Activated B cell treated with CpG ODN at 0.5 μM for 24 hours (primary cell): ENCODE measurements at regions of chr1 and their contacts with region 1.

Region 1: DNA sequence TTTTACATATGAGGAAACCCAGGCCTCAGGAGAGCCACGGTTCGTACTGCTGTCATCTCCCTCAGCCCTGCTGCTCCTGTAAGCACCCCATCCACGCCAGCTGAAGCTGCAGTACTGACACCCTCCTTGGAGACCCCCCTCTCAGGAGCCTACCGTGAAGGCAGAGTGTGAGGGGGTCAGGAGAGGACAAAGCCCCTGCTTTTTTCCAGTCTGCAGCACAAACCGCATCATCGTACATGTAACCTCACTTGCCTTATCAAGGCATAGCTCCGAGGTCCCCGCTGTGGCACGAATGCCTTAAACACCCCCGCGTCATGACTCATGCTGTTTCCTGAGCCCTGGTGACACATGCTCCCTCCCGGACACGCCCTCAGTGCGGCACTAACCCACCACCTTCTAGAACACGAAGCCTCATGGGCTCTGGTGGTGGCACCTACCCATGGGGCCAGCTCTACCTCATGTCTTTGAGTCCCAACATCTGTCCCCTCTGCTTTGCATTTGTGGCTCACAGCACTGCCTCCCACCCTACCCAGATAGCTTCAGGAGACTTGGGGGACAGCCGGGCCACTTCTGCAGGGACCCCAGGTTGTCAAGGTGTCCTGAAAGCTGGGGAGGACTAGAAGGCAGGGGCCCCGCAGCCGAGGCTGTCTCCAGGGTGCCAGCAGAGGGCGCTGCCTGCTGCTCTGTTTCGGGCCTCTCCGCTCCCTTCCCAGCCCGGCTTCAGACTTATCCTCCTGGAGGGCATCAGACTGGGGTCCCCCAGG is 4.9 kb downstream of the SH3BGRL3 start:
- DNase-seq: peak; percentile 75
- ATAC-seq: peak; percentile 54
- H3K4me3 Mint-ChIP-seq: peak overlapping the region; percentile 83
- H3K27ac Mint-ChIP-seq: peak overlapping the region; percentile 100
- H3K4me1 Mint-ChIP-seq: peaks cover 93% of the 10 kb centered on the region
- H3K27me3 Mint-ChIP-seq: no peaks in the 10 kb centered on the region
- CTCF ChIP-seq: no peak

Region 2: GRCh38 chr1:26111530-26112406 is 173.0 kb before region 1 on chr1 and contains the start of gene PDIK1L:
- CTCF ChIA-PET with region 1: no interaction called
- POLR2A ChIA-PET with region 1: interaction called, 4 read pairs
- intact Hi-C with region 1: loop called (anchors 2 kb)
- DNase-seq: peak; percentile 90
- ATAC-seq: peak; percentile 80
- H3K4me3 Mint-ChIP-seq: peak within 1 kb of the TSS; percentile 94
- H3K27ac Mint-ChIP-seq: peak within 1 kb of the TSS; percentile 89
- H3K4me1 Mint-ChIP-seq: peaks cover 20% of the 10 kb centered on the region
- H3K27me3 Mint-ChIP-seq: no peaks in the 10 kb centered on the region
- CTCF ChIP-seq: no peak
- total RNA-seq, gene PDIK1L: 9.4 and 10.5 TPM in 2 replicates

Region 3: GRCh38 chr1:26300586-26301275 is 16.0 kb after region 1 on chr1:
- CTCF ChIA-PET with region 1: interaction called, 3 read pairs
- POLR2A ChIA-PET with region 1: interaction called, 76 read pairs
- intact Hi-C with region 1: loop called (anchors 1 kb)
- DNase-seq: no peak
- ATAC-seq: no peak
- H3K4me3 Mint-ChIP-seq: no peak overlapping the region
- H3K27ac Mint-ChIP-seq: no peak overlapping the region
- H3K4me1 Mint-ChIP-seq: peaks cover 32% of the 10 kb centered on the region
- H3K27me3 Mint-ChIP-seq: no peaks in the 10 kb centered on the region
- CTCF ChIP-seq: no peak

Region 4: GRCh38 chr1:26315874-26316850 is 31.4 kb after region 1 on chr1:
- CTCF ChIA-PET with region 1: interaction called, 372 read pairs
- POLR2A ChIA-PET with region 1: interaction called, 1,638 read pairs
- intact Hi-C with region 1: loop called (anchors 1 kb)
- DNase-seq: no peak
- ATAC-seq: peak; percentile 18
- H3K4me3 Mint-ChIP-seq: peak overlapping the region; percentile 96
- H3K27ac Mint-ChIP-seq: peak overlapping the region; percentile 98
- H3K4me1 Mint-ChIP-seq: peaks cover 88% of the 10 kb centered on the region
- H3K27me3 Mint-ChIP-seq: no peaks in the 10 kb centered on the region
- CTCF ChIP-seq: no peak